MCF 10A (cell line): ENCODE measurements at regions of chr4 and their contacts with region 1.

Region 1: DNA sequence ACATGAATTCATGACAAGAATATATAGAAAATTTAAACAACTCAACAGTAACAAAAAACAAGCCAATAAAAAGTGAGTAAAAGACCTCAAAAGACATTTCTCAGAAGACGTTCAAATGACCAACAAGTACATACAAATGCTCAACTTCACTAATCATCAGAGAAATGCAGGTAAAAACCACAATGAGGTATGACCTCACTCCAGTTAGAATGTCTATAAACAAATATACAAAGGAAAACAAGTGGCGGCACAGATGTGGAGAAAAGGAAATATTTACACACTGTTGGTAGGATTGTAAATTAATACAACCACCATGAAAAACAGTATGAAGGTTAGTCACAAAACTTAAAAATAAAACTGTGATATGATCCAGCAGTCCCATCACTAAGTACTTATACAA is 1033.1 kb downstream of the RAPGEF2 start:
- DNase-seq: peak; percentile 10
- H3K4me3 Mint-ChIP-seq: no peak overlapping the region
- H3K27ac Mint-ChIP-seq: peak overlapping the region; percentile 1
- H3K4me1 Mint-ChIP-seq: peaks cover 18% of the 10 kb centered on the region
- H3K27me3 Mint-ChIP-seq: no peaks in the 10 kb centered on the region
- CTCF ChIP-seq: no peak

Region 2: GRCh38 chr4:160026720-160027119 is 109.3 kb before region 1 on chr4:
- CTCF ChIA-PET with region 1: no interaction called
- POLR2A ChIA-PET with region 1: no interaction called
- intact Hi-C with region 1: loop called (anchors 10 kb)
- DNase-seq: peak; percentile 91
- H3K4me3 Mint-ChIP-seq: no peak overlapping the region
- H3K27ac Mint-ChIP-seq: peak overlapping the region; percentile 3
- H3K4me1 Mint-ChIP-seq: peaks cover 14% of the 10 kb centered on the region
- H3K27me3 Mint-ChIP-seq: no peaks in the 10 kb centered on the region
- CTCF ChIP-seq: no peak

Region 3: DNA sequence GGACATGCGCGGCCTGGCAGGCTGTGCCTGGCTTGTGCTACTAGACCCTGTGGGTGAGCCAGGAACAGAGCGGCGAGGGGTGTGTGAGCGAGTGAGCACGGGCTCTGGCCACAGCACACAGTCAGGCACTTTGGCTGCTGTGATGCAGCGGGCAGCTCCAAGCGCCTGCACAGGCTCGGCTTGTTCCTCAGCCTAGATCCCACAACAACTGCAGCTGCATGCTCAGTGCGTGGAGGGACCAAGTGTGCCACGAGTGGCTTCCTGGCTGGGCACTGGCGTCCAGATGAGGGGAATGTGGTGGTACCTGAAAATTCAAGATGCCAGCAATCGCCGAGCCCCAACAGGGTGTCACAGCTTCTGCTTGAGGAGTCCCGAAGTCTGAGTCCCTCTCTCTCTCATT is 23.4 kb after region 1 on chr4:
- CTCF ChIA-PET with region 1: no interaction called
- POLR2A ChIA-PET with region 1: no interaction called
- intact Hi-C with region 1: no loop called
- DNase-seq: no peak
- H3K4me3 Mint-ChIP-seq: no peak overlapping the region
- H3K27ac Mint-ChIP-seq: no peak overlapping the region
- H3K4me1 Mint-ChIP-seq: no peaks in the 10 kb centered on the region
- H3K27me3 Mint-ChIP-seq: no peaks in the 10 kb centered on the region
- CTCF ChIP-seq: no peak

Region 4: GRCh38 chr4:160175064-160175645 is 39.1 kb after region 1 on chr4:
- CTCF ChIA-PET with region 1: no interaction called
- POLR2A ChIA-PET with region 1: no interaction called
- intact Hi-C with region 1: no loop called
- DNase-seq: peak; percentile 19
- H3K4me3 Mint-ChIP-seq: no peak overlapping the region
- H3K27ac Mint-ChIP-seq: peak overlapping the region; percentile 13
- H3K4me1 Mint-ChIP-seq: peaks cover 14% of the 10 kb centered on the region
- H3K27me3 Mint-ChIP-seq: no peaks in the 10 kb centered on the region
- CTCF ChIP-seq: peak; percentile 7